Activated CD4-positive, alpha-beta T cell treated with anti-CD3 and anti-CD28 coated beads, Interleukin-2, amount 10 ng/mL, durations not matched to agents 24 days and 14 days (primary cell): ENCODE measurements at regions of chrX and their contacts with region 1.

Region 1: DNA sequence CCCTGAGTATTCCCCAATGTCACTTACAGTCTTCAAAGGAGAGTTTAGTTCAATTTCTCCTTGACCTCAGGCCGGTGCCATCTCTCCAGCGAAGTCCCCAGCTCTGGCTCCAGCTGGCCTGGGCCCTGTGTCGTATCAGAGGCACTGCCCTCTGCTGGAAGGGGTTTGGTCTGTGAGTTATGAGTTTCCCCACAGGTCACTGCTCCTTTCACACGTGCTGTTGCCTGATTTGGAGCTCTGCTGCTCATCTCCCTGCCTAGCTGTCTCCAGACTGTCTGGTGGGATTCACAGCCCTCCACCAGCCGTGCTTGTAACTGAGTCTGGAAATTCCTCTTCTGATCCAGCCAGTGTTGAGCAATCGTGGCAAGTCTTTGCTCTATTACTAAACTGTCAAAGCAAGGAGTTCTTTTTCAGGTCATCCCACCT is at the start of gene RAP2C:
- DNase-seq: peak; percentile 85
- H3K4me3 Mint-ChIP-seq: peak within 1 kb of the TSS; percentile 86
- H3K27ac Mint-ChIP-seq: peak within 1 kb of the TSS; percentile 89
- H3K4me1 Mint-ChIP-seq: peaks cover 14% of the 10 kb centered on the region
- H3K27me3 Mint-ChIP-seq: no peaks in the 10 kb centered on the region
- total RNA-seq, gene RAP2C: 31.3 and 34.5 TPM in 2 replicates

Region 2: DNA sequence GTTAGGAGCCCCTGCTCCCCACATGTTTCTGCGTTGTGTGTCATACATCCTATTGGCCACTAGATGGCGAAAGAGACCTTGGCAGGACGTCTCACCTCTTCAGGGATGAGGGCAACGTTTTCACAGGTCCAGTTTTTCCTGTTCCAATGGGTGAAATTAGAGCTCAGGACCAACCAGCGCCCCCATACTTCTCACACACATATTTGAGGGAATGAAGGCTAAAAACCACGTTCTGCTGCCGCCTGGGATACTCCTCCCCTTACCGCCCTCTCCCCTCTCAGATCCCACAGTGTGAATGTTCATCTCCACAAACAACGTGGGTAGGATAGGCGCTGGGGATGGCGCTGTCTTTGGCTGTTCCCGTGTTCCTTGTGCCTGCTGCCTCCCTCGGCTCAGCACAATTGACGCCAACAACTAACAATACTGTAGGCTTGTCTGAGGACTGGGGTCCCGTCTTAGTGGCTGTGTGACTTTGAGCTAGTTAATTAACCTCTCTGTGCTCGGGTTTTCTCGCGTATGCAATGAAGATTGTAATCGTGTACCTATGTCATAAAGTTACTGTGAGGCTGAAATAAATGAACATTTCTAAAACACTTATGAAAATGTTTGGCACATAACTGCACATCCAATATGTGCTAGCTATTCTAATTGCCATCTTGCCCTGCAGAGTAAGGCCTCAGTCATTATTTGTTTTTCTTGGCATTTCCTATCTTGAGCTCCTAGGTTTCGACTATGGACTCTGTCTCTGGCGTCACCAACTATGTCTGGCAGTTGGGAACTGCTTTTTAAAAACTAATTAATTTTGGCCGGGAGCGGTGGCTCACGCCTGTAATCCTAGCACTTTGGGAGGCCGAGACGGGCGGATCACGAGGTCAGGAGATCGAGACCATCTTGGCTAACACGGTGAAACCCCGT is 377.6 kb before region 1 on chrX:
- intact Hi-C with region 1: loop called (anchors 1 kb)
- DNase-seq: peak; percentile 79
- H3K4me3 Mint-ChIP-seq: no peak overlapping the region
- H3K27ac Mint-ChIP-seq: no peak overlapping the region
- H3K4me1 Mint-ChIP-seq: peaks cover 3% of the 10 kb centered on the region
- H3K27me3 Mint-ChIP-seq: no peaks in the 10 kb centered on the region

Region 3: DNA sequence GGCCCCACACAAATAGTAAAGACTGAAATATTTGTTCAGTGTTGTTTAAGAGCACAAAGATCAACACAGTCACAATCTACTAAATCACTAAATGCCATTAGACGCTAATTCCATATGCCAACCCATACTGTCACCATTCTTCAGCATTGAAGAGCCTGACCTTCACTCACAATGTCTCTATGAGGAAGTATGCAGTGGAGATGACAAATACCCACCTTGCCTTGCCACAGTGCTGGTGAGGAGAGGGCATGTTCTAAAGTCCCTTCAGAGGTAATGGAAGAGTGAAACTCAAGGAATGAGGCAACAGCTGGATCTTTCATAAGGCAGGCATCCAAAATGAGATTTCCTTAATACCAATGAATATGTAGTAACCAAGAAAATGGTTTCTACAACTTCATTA is 141.9 kb before region 1 on chrX:
- intact Hi-C with region 1: no loop called
- DNase-seq: no peak
- H3K4me3 Mint-ChIP-seq: no peak overlapping the region
- H3K27ac Mint-ChIP-seq: no peak overlapping the region
- H3K4me1 Mint-ChIP-seq: no peaks in the 10 kb centered on the region
- H3K27me3 Mint-ChIP-seq: no peaks in the 10 kb centered on the region

Region 4: GRCh38 chrX:132092439-132093065 is 126.8 kb before region 1 on chrX:
- intact Hi-C with region 1: loop called (anchors 1 kb)
- DNase-seq: peak; percentile 79
- H3K4me3 Mint-ChIP-seq: no peak overlapping the region
- H3K27ac Mint-ChIP-seq: no peak overlapping the region
- H3K4me1 Mint-ChIP-seq: peaks cover 11% of the 10 kb centered on the region
- H3K27me3 Mint-ChIP-seq: peaks cover under 1% of the 10 kb centered on the region

Region 5: DNA sequence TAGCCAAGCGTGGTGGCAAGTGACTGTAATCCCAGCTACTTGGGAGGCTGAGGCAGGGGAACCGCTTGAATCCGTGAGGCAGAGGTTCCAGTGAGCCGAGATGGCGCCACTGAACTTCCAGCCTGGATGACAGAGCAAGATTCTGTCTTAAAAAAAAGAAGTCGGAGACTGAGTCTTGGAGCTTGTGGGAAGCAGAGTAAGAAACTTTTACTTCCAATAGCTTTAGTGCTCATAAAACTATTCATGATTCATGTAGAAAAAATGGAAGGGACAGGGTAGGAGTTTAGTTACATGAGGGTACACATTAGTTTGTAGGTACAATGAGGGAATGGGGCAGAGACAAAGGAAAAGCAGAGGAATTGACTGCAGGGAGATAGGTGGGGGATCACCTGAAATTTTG is 19.4 kb before region 1 on chrX:
- intact Hi-C with region 1: no loop called
- DNase-seq: no peak
- H3K4me3 Mint-ChIP-seq: no peak overlapping the region
- H3K27ac Mint-ChIP-seq: no peak overlapping the region
- H3K4me1 Mint-ChIP-seq: peaks cover 2% of the 10 kb centered on the region
- H3K27me3 Mint-ChIP-seq: peaks cover 2% of the 10 kb centered on the region

Region 6: GRCh38 chrX:132488819-132489577 is 269.6 kb after region 1 on chrX and contains the start of gene MBNL3:
- intact Hi-C with region 1: loop called (anchors 1 kb)
- DNase-seq: peak; percentile 87
- H3K4me3 Mint-ChIP-seq: peak within 1 kb of the TSS; percentile 93
- H3K27ac Mint-ChIP-seq: peak within 1 kb of the TSS; percentile 97
- H3K4me1 Mint-ChIP-seq: peaks cover 24% of the 10 kb centered on the region
- H3K27me3 Mint-ChIP-seq: peaks cover 10% of the 10 kb centered on the region
- total RNA-seq, gene MBNL3: 12.2 and 15.4 TPM in 2 replicates

Region 7: DNA sequence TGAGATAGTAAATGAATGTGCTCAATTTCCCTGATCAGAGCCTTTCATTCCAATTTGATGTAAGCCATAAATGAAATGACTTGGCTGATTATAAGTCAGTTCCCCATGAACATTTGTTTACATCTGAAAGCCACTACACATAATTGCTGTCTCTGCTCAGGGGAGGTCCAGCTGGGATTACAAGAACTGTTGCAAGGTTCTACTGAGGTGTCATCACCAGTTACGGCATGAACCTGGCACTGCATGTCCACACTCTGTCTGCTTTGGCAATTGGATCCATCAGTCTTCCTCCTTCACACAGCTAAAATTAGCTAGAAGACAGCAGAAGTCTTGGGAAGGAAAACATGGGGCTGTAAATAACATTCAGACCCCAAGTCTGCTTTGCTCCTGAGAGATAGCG is 282.2 kb after region 1 on chrX:
- intact Hi-C with region 1: no loop called
- DNase-seq: no peak
- H3K4me3 Mint-ChIP-seq: no peak overlapping the region
- H3K27ac Mint-ChIP-seq: no peak overlapping the region
- H3K4me1 Mint-ChIP-seq: no peaks in the 10 kb centered on the region
- H3K27me3 Mint-ChIP-seq: peaks cover 15% of the 10 kb centered on the region